ENCODE measurements at regions of chr13 and their contacts with region 1.

Region 1: GRCh38 chr13:103451656-103452055 is 385.4 kb upstream of the SLC10A2 start:
- DNase-seq: no peak
- ATAC-seq: no peak
- H3K4me3 ChIP-seq: no peak overlapping the region
- H3K27ac ChIP-seq: no peak overlapping the region
- H3K4me1 ChIP-seq: no peaks in the 10 kb centered on the region
- H3K27me3 ChIP-seq: no peaks in the 10 kb centered on the region
- CTCF ChIP-seq: no peak
- EP300 ChIP-seq: no peak
- POLR2A ChIP-seq: no peak
- RAD21 ChIP-seq: no peak

Region 2: DNA sequence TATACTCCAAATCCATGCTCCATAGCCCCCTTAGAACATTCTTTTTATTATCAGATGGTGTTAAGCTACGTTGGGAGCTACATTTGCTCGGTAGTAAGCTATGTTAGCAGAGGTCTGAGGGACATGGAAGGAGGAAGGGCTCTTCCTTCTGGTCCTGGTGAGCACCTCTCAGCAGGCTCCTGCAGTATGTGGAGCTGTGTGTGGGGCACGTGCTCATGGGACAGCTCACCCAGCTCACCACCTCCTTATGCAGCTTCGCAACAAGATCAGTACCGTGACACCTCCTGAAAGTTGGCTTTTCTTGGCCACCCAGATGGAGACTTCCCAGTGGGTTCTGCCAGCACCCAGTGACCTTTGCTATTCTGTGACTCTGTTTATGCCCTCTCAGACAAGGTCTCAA is 15.1 kb after region 1 on chr13:
- CTCF ChIA-PET with region 1: interaction called, 3 read pairs
- POLR2A ChIA-PET with region 1: no interaction called
- RAD21 ChIA-PET with region 1: no interaction called
- SMC1A ChIA-PET with region 1: interaction called, 14 read pairs
- in situ Hi-C with region 1: no loop called
- intact Hi-C with region 1: no loop called
- DNase-seq: no peak
- ATAC-seq: no peak
- H3K4me3 ChIP-seq: no peak overlapping the region
- H3K27ac ChIP-seq: no peak overlapping the region
- H3K4me1 ChIP-seq: no peaks in the 10 kb centered on the region
- H3K27me3 ChIP-seq: no peaks in the 10 kb centered on the region
- CTCF ChIP-seq: no peak
- EP300 ChIP-seq: no peak
- POLR2A ChIP-seq: no peak
- RAD21 ChIP-seq: no peak

Measured in GM12878 (cell line).